ENCODE measurements at regions of chr12 and their contacts with region 1.

Region 1: DNA sequence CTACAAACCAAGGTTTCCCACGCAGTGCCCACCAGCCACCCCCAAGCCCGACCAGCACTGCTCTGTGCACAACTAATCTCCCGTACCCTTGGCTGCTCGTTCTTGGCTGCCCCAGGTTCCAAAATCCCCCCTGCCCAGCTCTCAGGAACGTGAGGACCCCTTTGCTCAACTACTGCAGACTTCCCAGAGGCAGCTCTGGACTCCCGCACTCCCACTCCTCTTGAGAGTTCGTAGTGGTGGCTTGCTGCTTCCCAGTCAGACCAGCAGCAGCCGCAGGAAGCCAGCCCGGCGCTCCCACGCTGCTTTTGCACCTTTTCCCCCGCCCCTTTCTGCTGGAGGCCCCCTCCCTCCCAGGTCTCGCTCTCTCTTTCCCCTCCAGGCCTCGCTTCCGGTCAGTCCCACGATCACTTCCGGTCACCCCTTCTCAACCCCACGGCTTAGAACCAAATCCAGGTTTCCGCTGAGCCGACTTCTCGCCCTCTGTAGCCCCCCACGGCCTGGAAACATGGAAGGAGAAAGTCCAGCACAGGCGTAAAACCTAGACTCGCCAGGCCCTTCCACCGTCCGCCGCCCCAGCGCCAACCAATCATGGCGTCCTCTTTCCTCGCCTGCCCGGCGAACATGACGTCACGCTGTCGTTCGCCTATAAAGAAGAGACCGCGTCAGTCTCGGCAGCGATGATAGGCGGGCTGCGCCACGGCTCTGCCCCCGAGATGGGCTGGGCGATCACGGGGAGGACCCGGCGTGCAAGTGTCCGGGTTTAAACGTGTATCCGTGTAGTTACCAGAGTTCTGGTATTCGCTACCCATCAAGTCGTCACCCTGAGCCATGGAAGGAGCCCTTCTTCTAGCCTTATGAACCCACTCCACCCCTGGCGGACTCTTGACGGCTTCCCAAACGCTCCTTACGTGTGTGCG is at the start of gene TFCP2:
- DNase-seq: peak; percentile 97
- H3K4me3 ChIP-seq: peak within 1 kb of the TSS; percentile 78
- H3K27ac ChIP-seq: peak within 1 kb of the TSS; percentile 97
- H3K4me1 ChIP-seq: no peaks in the 10 kb centered on the region
- H3K27me3 ChIP-seq: no peaks in the 10 kb centered on the region
- CTCF ChIP-seq: no peak
- total RNA-seq, gene TFCP2: 46.1 and 49.2 TPM in 2 replicates

Region 2: DNA sequence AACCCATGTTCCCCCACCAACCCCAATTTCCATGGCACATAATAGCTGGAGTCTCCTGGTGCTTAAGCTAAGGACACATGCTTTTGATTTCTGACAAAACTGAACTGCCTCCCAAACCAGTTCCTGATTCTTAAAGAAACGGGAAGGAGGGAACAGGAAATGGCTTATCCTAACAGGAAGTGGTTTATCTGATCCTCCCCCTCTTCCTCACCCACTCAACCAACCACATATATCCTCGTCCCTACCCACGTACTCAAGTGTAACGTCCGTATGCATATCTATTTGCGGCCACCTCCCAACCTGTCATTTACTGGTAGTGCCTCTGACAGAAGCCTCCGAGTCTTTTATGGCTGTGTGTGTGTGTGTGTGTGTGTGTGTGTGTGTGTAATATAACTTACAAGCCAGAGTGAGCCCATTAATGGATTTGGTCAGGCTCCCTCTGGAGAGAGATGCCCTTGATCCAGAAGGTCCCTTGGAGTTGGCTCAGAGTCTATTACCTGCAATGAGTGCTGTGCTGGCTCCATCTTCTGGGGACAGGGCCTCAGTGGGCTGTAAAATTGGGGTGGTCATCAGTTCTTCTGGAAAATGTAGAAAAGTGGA is 73.6 kb after region 1 on chr12:
- CTCF ChIA-PET with region 1: no interaction called
- POLR2A ChIA-PET with region 1: interaction called, 11 read pairs
- intact Hi-C with region 1: no loop called
- DNase-seq: peak; percentile 91
- H3K4me3 ChIP-seq: no peak overlapping the region
- H3K27ac ChIP-seq: peak overlapping the region; percentile 77
- H3K4me1 ChIP-seq: peaks cover 27% of the 10 kb centered on the region
- H3K27me3 ChIP-seq: no peaks in the 10 kb centered on the region
- CTCF ChIP-seq: 0 out of 2 replicates have a peak, but pooled peaks have one; percentile 24